Mammary epithelial cell (primary cell): ENCODE measurements at regions of chr4 and their contacts with region 1.

Region 1: GRCh38 chr4:67988991-67989390 is 25.7 kb upstream of the TMPRSS11A start:
- DNase-seq: peak; percentile 20
- H3K4me3 ChIP-seq: no peak overlapping the region
- H3K27ac ChIP-seq: no peak overlapping the region
- H3K4me1 ChIP-seq: no peaks in the 10 kb centered on the region
- H3K27me3 ChIP-seq: no peaks in the 10 kb centered on the region
- CTCF ChIP-seq: no peak

Region 2: GRCh38 chr4:67437974-67438713 is 550.8 kb before region 1 on chr4:
- CTCF ChIA-PET with region 1: no interaction called
- dilution Hi-C with region 1: no loop called
- in situ Hi-C with region 1: no loop called
- intact Hi-C with region 1: no loop called
- DNase-seq: peak; percentile 54
- H3K4me3 ChIP-seq: no peak overlapping the region
- H3K27ac ChIP-seq: no peak overlapping the region
- H3K4me1 ChIP-seq: no peaks in the 10 kb centered on the region
- H3K27me3 ChIP-seq: no peaks in the 10 kb centered on the region
- CTCF ChIP-seq: no peak

Region 3: DNA sequence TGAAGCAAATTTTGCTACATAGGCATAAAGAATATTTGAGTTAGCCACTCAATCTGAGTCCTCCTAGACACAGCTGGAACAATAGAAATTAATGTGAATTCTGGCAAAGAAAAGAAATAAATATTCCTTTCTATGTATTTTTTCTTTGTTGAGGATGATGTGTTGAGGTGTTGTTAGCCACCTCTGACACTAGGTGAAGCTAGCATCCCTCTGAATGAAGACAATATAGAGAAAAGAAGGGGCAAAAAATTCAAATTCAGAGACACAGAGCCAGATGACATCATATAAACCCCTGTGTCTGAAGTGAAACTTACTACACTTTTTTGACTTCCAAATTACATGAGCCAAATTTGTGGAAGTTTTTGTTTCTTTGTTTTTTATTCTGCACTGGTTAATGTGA is 70.6 kb before region 1 on chr4:
- CTCF ChIA-PET with region 1: no interaction called
- dilution Hi-C with region 1: no loop called
- in situ Hi-C with region 1: no loop called
- intact Hi-C with region 1: loop called (anchors 1 kb)
- DNase-seq: peak; percentile 8
- H3K4me3 ChIP-seq: no peak overlapping the region
- H3K27ac ChIP-seq: no peak overlapping the region
- H3K4me1 ChIP-seq: no peaks in the 10 kb centered on the region
- H3K27me3 ChIP-seq: no peaks in the 10 kb centered on the region
- CTCF ChIP-seq: peak; percentile 74 to 77

Region 4: GRCh38 chr4:67934628-67935027 is 54.4 kb before region 1 on chr4:
- CTCF ChIA-PET with region 1: no interaction called
- dilution Hi-C with region 1: loop called (anchors 5 kb)
- in situ Hi-C with region 1: no loop called
- intact Hi-C with region 1: no loop called
- DNase-seq: peak; percentile 51
- H3K4me3 ChIP-seq: no peak overlapping the region
- H3K27ac ChIP-seq: no peak overlapping the region
- H3K4me1 ChIP-seq: peaks cover 4% of the 10 kb centered on the region
- H3K27me3 ChIP-seq: no peaks in the 10 kb centered on the region
- CTCF ChIP-seq: no peak

Region 5: DNA sequence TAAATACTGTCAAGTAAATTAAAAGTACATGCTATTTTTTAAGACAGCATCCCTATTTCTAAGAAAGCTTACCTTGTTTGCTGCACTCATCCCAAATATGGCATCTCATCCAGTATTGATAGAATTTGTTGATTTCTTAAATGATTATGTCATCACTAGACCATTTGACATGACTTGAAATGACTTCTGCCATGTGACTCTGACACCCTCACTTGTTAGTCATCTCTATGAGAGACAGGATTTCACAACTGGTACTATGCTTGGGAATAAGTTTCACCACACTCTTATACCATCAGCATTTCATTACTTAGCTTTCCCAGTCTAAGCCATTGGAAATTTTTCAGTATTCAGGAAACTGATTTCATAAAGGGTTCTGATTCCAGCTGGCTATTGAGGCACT is 85.4 kb after region 1 on chr4:
- CTCF ChIA-PET with region 1: no interaction called
- dilution Hi-C with region 1: no loop called
- in situ Hi-C with region 1: no loop called
- intact Hi-C with region 1: loop called (anchors 5 kb)
- DNase-seq: peak; percentile 83
- H3K4me3 ChIP-seq: no peak overlapping the region
- H3K27ac ChIP-seq: no peak overlapping the region
- H3K4me1 ChIP-seq: peaks cover 5% of the 10 kb centered on the region
- H3K27me3 ChIP-seq: no peaks in the 10 kb centered on the region
- CTCF ChIP-seq: no peak